ENCODE measurements at regions of chr4 and their contacts with region 1.

Region 1: DNA sequence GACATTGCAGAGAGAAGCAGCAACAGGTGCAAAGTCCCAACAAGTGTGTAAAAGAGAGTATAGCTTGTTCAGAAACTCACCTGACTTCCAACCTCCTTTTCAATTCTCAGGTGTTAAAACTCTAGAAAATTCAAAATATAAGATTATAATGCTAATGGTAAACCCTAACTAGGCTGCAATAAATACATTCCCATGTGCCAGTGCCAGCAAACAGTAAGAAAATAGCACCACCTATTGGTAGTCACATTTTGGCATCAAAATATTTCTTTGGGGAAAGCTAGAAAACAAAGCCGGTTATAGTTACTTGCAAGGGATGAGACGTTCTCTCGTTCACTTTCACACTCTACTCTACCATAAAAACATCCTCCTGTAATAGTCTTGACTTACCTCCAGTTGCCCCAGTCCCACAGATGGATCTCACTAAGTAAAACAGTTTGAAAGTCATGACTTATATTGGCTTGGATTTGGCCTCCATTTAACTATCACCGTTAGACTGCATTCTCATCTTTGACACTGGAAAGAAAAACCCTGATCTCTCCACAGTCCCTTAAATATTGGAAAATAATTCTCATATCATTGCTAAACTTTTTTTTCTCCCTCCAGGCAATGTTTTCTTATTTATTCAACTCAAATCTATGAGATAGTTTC is 9.6 kb downstream of the BMP3 start:
- DNase-seq: no peak
- H3K4me3 ChIP-seq: no peak overlapping the region
- H3K27ac ChIP-seq: no peak overlapping the region
- H3K4me1 ChIP-seq: peaks cover 0 to 2% (median 0%) of the 10 kb centered on the region in 4 experiments; a peak in 1 of 7 replicates
- H3K27me3 ChIP-seq: no peaks in the 10 kb centered on the region
- CTCF ChIP-seq: peak in 2 of 3 experiments; percentile 64 to 65; a peak in 2 of 4 replicates
- EP300 ChIP-seq: no peak
- POLR2A ChIP-seq: no peak
- RAD21 ChIP-seq: peak; percentile 86 to 89

Region 2: GRCh38 chr4:80360084-80360483 is 680.1 kb before region 1 on chr4:
- CTCF ChIA-PET with region 1: interaction called, 73 read pairs
- POLR2A ChIA-PET with region 1: no interaction called
- DNase-seq: no peak
- H3K4me3 ChIP-seq: no peak overlapping the region
- H3K27ac ChIP-seq: no peak overlapping the region
- H3K4me1 ChIP-seq: peaks cover 0 to 4% (median 2%) of the 10 kb centered on the region in 4 experiments; a peak in 2 of 7 replicates
- H3K27me3 ChIP-seq: no peaks in the 10 kb centered on the region
- CTCF ChIP-seq: no peak
- EP300 ChIP-seq: no peak
- POLR2A ChIP-seq: no peak
- RAD21 ChIP-seq: no peak

Region 3: DNA sequence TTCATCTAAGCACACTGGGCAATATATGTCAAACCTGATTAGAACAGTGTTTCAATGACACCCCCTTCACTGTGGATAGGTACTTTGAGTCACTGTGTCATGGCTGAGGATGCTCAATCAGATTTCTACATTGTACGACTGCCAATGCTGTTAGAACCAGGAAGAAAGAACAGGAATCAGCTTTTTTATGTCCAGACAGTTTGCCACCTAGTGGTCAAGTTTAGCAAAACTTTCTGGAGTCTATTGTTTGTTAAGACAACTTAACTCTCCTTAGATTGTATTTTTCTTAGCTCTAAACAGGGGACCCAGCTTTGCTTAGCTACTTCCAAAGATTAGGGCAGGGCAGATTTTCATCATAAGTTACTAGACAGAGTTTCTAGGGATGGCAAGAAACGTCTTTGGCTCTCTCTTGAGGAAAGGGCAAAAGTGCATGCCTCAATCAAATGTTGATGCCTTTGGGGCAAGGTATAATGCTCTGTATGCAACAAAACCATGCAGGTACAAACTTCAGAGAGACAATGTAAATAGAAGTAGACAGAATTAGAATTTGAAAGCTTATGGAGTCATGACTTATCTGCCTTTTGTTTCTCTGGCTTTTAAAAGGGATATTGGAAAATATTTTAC is 50.1 kb before region 1 on chr4:
- CTCF ChIA-PET with region 1: interaction called, 12 read pairs
- POLR2A ChIA-PET with region 1: no interaction called
- DNase-seq: peak; percentile 15 to 43
- H3K4me3 ChIP-seq: no peak overlapping the region
- H3K27ac ChIP-seq: no peak overlapping the region
- H3K4me1 ChIP-seq: peaks cover 0 to 3% (median under 1%) of the 10 kb centered on the region in 4 experiments; a peak in 1 of 7 replicates
- H3K27me3 ChIP-seq: no peaks in the 10 kb centered on the region
- CTCF ChIP-seq: peak in 2 of 3 experiments; percentile 48 to 72; a peak in 2 of 4 replicates
- EP300 ChIP-seq: no peak
- POLR2A ChIP-seq: no peak
- RAD21 ChIP-seq: peak; percentile 64 to 66

Region 4: DNA sequence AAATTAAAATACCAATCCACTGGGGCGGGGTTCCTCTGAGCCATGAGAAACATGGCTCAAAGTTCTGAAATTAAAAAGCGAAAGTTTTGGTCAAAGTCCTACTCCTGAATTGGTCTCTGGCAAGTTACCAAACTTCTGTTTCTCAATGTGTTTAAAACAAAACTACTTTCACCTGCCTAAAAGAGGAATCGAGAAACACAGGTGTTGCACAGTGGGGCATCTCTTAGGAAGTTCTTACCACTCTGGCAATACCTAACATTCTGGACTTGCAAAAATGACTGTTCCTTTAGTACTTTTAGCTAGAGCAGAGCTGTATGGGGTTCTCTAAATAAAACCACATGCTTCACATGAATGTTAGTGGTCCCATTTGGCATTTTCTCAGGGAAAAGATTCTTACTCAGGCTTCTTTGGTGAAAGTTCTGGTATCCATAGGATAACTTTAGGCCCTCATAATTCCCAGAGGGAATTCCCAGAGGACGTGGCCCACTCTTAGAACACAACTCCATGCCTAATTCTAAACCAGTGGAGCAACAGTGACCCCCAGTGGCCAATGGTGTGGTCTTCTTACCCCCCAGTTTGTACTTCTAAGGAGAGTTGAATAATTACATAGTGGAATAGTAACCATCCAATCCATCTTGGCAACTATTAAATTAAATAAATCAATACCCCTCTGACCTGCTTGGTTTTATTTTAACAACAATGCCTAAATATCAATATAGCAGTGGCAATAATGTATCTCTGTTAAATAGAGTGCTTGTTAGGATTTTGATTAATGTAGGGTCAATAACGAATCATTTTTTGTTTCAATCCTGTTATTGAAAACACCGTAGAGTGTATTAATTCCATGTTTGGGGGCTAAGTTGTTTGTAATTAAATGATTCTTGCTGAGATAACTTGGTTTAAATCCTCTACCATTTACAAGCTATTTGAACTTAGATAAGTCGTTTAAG is 12.3 kb after region 1 on chr4:
- CTCF ChIA-PET with region 1: interaction called, 47 read pairs
- POLR2A ChIA-PET with region 1: no interaction called
- DNase-seq: peak; percentile 44 to 89
- H3K4me3 ChIP-seq: no peak overlapping the region
- H3K27ac ChIP-seq: no peak overlapping the region
- H3K4me1 ChIP-seq: no peaks in the 10 kb centered on the region
- H3K27me3 ChIP-seq: no peaks in the 10 kb centered on the region
- CTCF ChIP-seq: peak; percentile 44 to 75 (median 74)
- EP300 ChIP-seq: no peak
- POLR2A ChIP-seq: no peak
- RAD21 ChIP-seq: peak; percentile 93 to 96

Region 5: DNA sequence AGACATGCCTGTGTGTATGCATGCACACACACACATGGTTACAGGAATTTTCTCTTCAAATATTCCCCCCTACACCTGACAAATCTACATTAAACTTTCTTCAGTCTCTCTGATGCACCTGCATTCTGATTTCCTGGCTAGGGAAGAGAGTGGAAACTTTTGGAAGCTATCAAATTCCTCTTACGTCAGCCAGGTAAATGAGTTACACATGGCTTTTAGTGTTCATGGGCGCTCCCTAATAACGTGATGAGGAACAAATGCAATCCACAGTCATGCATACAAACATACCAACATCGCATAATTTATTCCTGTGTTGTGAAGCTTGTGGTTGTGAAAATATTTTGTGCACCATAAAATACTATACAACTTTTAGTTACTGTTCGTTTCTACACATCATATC is 25.3 kb after region 1 on chr4:
- CTCF ChIA-PET with region 1: no interaction called
- POLR2A ChIA-PET with region 1: no interaction called
- DNase-seq: no peak
- H3K4me3 ChIP-seq: no peak overlapping the region
- H3K27ac ChIP-seq: no peak overlapping the region
- H3K4me1 ChIP-seq: no peaks in the 10 kb centered on the region
- H3K27me3 ChIP-seq: no peaks in the 10 kb centered on the region
- CTCF ChIP-seq: no peak
- EP300 ChIP-seq: no peak
- POLR2A ChIP-seq: no peak
- RAD21 ChIP-seq: no peak

Region 6: GRCh38 chr4:81173213-81173612 is 133.1 kb after region 1 on chr4:
- CTCF ChIA-PET with region 1: no interaction called
- POLR2A ChIA-PET with region 1: no interaction called
- DNase-seq: no peak
- H3K4me3 ChIP-seq: no peak overlapping the region
- H3K27ac ChIP-seq: no peak overlapping the region
- H3K4me1 ChIP-seq: no peaks in the 10 kb centered on the region
- H3K27me3 ChIP-seq: peaks cover 0 to 1% (median 0%) of the 10 kb centered on the region in 4 experiments; a peak in 1 of 7 replicates
- CTCF ChIP-seq: no peak
- EP300 ChIP-seq: no peak
- POLR2A ChIP-seq: no peak
- RAD21 ChIP-seq: no peak

Region 7: GRCh38 chr4:81378386-81378785 is 338.2 kb after region 1 on chr4:
- CTCF ChIA-PET with region 1: no interaction called
- POLR2A ChIA-PET with region 1: no interaction called
- DNase-seq: no peak
- H3K4me3 ChIP-seq: no peak overlapping the region
- H3K27ac ChIP-seq: no peak overlapping the region
- H3K4me1 ChIP-seq: no peaks in the 10 kb centered on the region
- H3K27me3 ChIP-seq: peaks cover 0 to 1% (median 0%) of the 10 kb centered on the region in 4 experiments; a peak in 1 of 7 replicates
- CTCF ChIP-seq: no peak
- EP300 ChIP-seq: no peak
- POLR2A ChIP-seq: no peak
- RAD21 ChIP-seq: no peak

Measured in H1 (cell line).